Mammary epithelial cell (primary cell): ENCODE measurements at regions of chr21 and their contacts with region 1.

Region 1: GRCh38 chr21:36859744-36860501 is 106.5 kb downstream of the HLCS start:
- DNase-seq: peak; percentile 21
- H3K4me3 ChIP-seq: no peak overlapping the region
- H3K27ac ChIP-seq: peak overlapping the region; percentile 77
- H3K4me1 ChIP-seq: peaks cover 20% of the 10 kb centered on the region
- H3K27me3 ChIP-seq: no peaks in the 10 kb centered on the region
- CTCF ChIP-seq: no peak

Region 2: GRCh38 chr21:36630485-36631206 is 229.3 kb before region 1 on chr21:
- CTCF ChIA-PET with region 1: no interaction called
- dilution Hi-C with region 1: no loop called
- in situ Hi-C with region 1: no loop called
- intact Hi-C with region 1: no loop called
- DNase-seq: peak; percentile 12
- H3K4me3 ChIP-seq: no peak overlapping the region
- H3K27ac ChIP-seq: no peak overlapping the region
- H3K4me1 ChIP-seq: peaks cover 3% of the 10 kb centered on the region
- H3K27me3 ChIP-seq: peaks cover 2% of the 10 kb centered on the region
- CTCF ChIP-seq: peak; percentile 67 to 74

Region 3: GRCh38 chr21:36909901-36910561 is 50.1 kb after region 1 on chr21:
- CTCF ChIA-PET with region 1: no interaction called
- dilution Hi-C with region 1: no loop called
- in situ Hi-C with region 1: no loop called
- intact Hi-C with region 1: loop called (anchors 2 kb)
- DNase-seq: peak; percentile 93
- H3K4me3 ChIP-seq: no peak overlapping the region
- H3K27ac ChIP-seq: peak overlapping the region; percentile 91
- H3K4me1 ChIP-seq: peaks cover 21% of the 10 kb centered on the region
- H3K27me3 ChIP-seq: no peaks in the 10 kb centered on the region
- CTCF ChIP-seq: no peak

Region 4: GRCh38 chr21:37232274-37233018 is 372.5 kb after region 1 on chr21:
- CTCF ChIA-PET with region 1: no interaction called
- dilution Hi-C with region 1: no loop called
- in situ Hi-C with region 1: no loop called
- intact Hi-C with region 1: no loop called
- DNase-seq: no peak
- H3K4me3 ChIP-seq: no peak overlapping the region
- H3K27ac ChIP-seq: no peak overlapping the region
- H3K4me1 ChIP-seq: no peaks in the 10 kb centered on the region
- H3K27me3 ChIP-seq: no peaks in the 10 kb centered on the region
- CTCF ChIP-seq: no peak